ENCODE measurements at regions of chr21 and their contacts with region 1.

Region 1: DNA sequence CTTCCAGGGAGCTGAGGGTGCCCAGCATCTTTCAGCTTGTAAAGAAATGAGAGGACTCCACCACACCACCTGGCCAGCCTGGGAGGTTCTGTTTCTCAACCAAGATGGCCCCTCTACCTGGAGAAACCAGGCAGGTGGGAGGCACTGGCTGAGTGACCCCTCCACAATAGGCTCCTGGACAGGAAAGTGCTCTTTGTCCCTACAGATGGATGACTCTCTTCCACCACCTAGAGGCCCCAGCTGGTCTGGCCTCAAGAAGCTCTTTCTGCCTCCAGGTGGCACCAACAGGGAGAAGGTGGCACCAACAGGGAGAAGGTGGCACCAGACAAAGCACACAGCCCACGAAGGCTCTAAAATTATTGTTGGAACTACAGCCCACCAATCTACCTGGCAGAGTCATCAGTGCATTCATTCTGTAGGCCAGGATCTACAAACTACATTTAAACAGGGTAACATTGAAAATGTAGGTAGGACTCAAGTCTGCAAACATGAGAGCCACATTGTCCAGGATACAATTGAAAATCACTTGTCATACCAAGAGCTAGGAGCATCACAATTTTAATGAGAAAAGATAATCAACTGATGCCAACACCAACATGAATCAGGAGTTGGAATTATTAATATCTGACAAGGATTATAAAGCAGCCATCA is 14.4 kb downstream of the TMPRSS3 start:
- DNase-seq: peak; percentile 71
- ATAC-seq: peak; percentile 77
- H3K4me3 Mint-ChIP-seq: no peak overlapping the region
- H3K27ac Mint-ChIP-seq: no peak overlapping the region
- H3K4me1 Mint-ChIP-seq: peaks cover 15% of the 10 kb centered on the region
- H3K27me3 Mint-ChIP-seq: no peaks in the 10 kb centered on the region

Region 2: GRCh38 chr21:42309753-42310221 is 71.7 kb before region 1 on chr21:
- CTCF ChIA-PET with region 1: interaction called, 25 read pairs
- DNase-seq: peak; percentile 81
- ATAC-seq: peak; percentile 79
- H3K4me3 Mint-ChIP-seq: no peak overlapping the region
- H3K27ac Mint-ChIP-seq: no peak overlapping the region
- H3K4me1 Mint-ChIP-seq: peaks cover 18% of the 10 kb centered on the region
- H3K27me3 Mint-ChIP-seq: peaks cover 20% of the 10 kb centered on the region

Region 3: DNA sequence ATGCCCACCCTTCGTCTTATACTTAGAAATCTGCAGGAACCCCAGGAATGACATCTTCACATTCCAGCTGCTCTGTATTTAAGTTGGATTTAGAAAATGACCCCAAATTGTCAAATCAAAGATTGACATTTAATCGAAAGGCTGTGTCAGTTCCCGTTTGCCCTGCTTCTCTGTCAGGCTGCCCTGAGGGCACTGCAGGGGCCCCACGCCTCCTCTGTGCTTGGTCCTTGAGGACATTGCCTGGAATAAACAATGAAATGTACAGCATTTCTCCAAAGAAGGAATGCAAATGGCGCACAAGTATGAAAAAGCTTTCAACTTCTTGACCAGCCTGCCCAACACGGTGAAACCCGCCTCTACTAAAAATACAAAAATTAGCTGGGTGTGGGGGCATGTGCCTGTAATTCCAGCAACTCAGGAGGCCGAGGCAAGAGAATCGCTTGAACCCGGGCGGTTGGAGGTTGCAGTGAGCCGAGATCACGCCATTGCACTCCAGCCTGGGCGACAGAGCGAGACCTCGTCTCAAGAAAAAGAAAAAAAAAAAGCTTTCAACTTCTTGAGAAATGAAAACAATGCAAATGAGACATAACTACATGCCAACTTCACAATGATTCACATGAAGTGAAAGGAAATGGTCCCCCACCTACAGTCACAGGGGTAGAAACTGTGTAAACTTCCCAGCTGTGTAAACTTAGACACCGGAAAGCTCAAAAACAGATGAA is 11.4 kb after region 1 on chr21:
- CTCF ChIA-PET with region 1: interaction called, 17 read pairs
- DNase-seq: no peak
- ATAC-seq: peak; percentile 78
- H3K4me3 Mint-ChIP-seq: peak overlapping the region; percentile 56
- H3K27ac Mint-ChIP-seq: peak overlapping the region; percentile 73
- H3K4me1 Mint-ChIP-seq: peaks cover 50% of the 10 kb centered on the region
- H3K27me3 Mint-ChIP-seq: no peaks in the 10 kb centered on the region

Region 4: GRCh38 chr21:42397746-42398557 is 16.5 kb after region 1 on chr21:
- CTCF ChIA-PET with region 1: interaction called, 28 read pairs
- DNase-seq: no peak
- ATAC-seq: no peak
- H3K4me3 Mint-ChIP-seq: no peak overlapping the region
- H3K27ac Mint-ChIP-seq: peak overlapping the region; percentile 60
- H3K4me1 Mint-ChIP-seq: peaks cover 52% of the 10 kb centered on the region
- H3K27me3 Mint-ChIP-seq: no peaks in the 10 kb centered on the region

Region 5: DNA sequence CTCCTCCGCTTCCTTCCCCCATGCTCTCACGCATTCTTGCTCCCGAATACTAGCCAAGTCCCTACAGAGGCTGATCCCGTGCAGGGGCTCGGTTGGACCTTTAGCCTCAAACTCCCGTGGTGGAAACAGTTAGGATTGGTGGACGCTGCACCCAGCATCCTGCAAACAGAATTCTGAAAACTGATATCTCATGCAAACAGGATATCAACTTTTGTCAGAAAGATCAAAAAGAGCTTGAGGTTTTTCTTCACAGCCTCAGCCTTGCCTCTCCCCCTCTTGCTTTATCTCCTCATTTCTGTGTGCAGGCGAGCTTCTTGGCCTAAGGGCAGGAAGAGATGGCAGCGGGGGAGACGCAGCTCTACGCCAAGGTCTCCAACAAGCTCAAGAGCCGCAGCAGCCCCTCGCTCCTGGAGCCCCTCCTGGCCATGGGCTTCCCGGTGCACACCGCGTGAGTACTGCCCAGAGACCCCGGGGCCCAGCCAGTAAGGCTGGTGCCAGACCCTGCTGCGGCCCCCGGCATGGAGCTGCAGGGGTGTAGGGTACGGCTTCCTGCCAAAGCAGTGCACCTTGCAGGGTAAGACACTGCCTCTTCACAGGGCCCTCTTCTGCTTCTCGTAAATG is 22.3 kb after region 1 on chr21 and contains the start of gene UBASH3A:
- CTCF ChIA-PET with region 1: interaction called, 28 read pairs
- DNase-seq: peak; percentile 74
- ATAC-seq: peak; percentile 52
- H3K4me3 Mint-ChIP-seq: peak within 1 kb of the TSS; percentile 96
- H3K27ac Mint-ChIP-seq: peak within 1 kb of the TSS; percentile 99
- H3K4me1 Mint-ChIP-seq: peaks cover 57% of the 10 kb centered on the region
- H3K27me3 Mint-ChIP-seq: no peaks in the 10 kb centered on the region
- total RNA-seq, gene UBASH3A: 75.3 to 89.5 TPM

Region 6: DNA sequence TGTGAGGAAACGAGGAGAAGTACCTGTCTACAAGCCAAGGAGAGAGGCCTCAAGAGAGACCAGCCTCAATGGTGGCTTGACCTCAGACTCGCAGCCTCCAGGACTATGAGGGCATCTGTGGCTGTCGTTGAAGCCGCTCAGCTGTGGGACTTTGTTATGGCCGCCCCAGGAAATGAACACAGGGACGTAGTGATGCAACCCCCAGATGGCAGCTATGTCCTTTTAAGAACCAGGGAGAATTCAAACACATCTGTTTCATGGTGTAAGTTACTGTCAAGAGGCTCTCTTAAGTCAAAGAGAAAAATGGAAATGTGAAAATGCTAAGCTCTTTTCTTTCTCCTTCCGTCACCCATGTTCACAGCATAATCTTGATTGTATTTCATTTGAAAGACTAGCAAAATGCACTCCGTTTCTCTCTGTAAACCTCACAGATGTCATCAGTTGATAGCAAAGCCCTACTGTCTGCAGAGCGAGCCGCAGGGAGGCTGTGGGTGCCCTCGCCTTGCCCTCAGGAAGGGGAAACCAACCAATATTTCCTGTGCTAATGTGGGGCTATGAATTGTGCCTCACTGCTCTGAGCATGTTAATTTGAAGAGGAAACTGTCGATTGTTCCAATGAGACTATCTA is 43.6 kb after region 1 on chr21:
- CTCF ChIA-PET with region 1: interaction called, 11 read pairs
- DNase-seq: peak; percentile 93
- ATAC-seq: peak; percentile 70
- H3K4me3 Mint-ChIP-seq: peak overlapping the region; percentile 52
- H3K27ac Mint-ChIP-seq: peak overlapping the region; percentile 93
- H3K4me1 Mint-ChIP-seq: peaks cover 72% of the 10 kb centered on the region
- H3K27me3 Mint-ChIP-seq: no peaks in the 10 kb centered on the region

Region 7: GRCh38 chr21:42449296-42449927 is 68.0 kb after region 1 on chr21:
- CTCF ChIA-PET with region 1: interaction called, 20 read pairs
- DNase-seq: no peak
- ATAC-seq: no peak
- H3K4me3 Mint-ChIP-seq: no peak overlapping the region
- H3K27ac Mint-ChIP-seq: peak overlapping the region; percentile 82
- H3K4me1 Mint-ChIP-seq: peaks cover 49% of the 10 kb centered on the region
- H3K27me3 Mint-ChIP-seq: no peaks in the 10 kb centered on the region

Region 8: GRCh38 chr21:42561762-42562650 is 180.5 kb after region 1 on chr21:
- CTCF ChIA-PET with region 1: no interaction called
- DNase-seq: no peak
- ATAC-seq: no peak
- H3K4me3 Mint-ChIP-seq: no peak overlapping the region
- H3K27ac Mint-ChIP-seq: no peak overlapping the region
- H3K4me1 Mint-ChIP-seq: peaks cover 2% of the 10 kb centered on the region
- H3K27me3 Mint-ChIP-seq: no peaks in the 10 kb centered on the region